ENCODE measurements at regions of chr6 and their contacts with region 1.

Region 1: DNA sequence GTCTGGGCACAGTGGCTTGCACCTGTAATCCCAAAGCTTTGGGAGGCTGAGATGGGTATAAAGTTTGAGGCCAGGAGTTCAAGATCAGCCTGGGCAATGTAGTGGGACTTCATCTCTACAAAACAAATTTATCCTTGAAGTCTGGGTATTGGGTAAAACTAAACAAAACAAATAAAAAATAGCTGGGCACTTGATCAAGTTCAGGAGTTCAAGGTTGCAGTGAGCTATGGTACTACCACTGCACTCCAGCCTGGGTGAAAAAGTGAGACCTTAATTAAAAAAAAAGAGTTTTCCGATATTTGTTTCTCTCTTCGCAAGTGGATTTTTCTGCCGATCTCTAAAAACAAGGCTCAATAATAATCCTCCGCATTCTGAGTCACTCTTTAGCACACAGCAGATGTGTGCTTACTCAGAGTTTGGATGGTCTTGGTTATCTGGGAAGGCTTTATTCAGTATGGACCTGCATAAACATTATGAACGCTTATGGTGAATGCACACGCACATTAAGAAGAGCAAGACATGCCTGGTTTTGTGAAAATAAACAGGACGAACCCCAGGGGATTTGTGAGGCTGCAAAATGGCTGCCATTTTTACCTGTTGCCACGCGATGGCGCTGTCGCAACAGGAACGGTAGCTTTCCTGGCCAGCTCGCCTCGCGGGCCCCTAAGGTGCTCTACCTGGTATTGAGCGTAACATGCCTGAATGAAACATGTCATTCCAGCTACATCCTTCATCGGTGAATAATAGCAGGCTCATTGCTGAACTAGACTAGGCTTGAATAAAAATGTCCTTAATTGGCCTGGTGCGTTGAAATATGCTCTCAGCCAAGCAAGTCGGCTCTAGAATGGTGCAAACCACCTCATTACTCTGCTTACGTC is 6.0 kb downstream of the OPN5 start:
- DNase-seq: peak; percentile 51
- ATAC-seq: peak; percentile 87
- H3K4me3 ChIP-seq: no peak overlapping the region
- H3K27ac ChIP-seq: no peak overlapping the region
- H3K4me1 ChIP-seq: no peaks in the 10 kb centered on the region
- H3K27me3 ChIP-seq: peaks cover 5% of the 10 kb centered on the region
- CTCF ChIP-seq: peak; percentile 91

Region 2: DNA sequence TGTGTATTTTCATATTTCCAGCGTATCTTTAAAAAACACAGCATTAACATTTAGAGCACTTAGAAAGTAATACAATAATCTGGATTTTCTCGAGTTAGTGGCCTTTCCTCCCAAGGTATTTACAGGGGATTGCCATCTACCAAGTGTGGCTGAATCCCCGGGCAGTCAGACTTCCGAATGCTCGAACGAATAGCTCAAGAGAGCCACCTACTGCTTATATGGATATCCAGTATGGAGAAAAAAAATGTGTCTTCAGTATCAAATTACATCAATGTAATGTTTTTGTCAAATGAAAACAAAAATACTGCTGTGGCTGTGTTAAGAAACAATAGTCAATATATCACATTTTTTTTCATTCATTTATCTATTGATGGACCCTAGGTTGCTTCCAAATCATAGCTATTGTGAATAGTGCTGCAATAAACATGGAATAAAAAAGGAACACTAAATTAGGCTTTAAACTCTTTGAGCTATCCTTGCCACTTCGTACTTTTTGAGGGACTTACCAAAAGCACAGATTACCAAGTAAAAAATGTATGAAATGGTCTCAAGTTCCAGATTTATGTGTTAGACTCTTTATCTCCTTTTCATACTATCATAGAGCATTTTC is 977.6 kb after region 1 on chr6:
- CTCF ChIA-PET with region 1: no interaction called
- POLR2A ChIA-PET with region 1: interaction called, 7 read pairs
- in situ Hi-C with region 1: no loop called
- intact Hi-C with region 1: loop called (anchors 1 kb)
- DNase-seq: peak; percentile 38
- ATAC-seq: no peak; the same call in 1 of the 2 replicates
- H3K4me3 ChIP-seq: no peak overlapping the region
- H3K27ac ChIP-seq: no peak overlapping the region; the same call in 1 of the 2 replicates
- H3K4me1 ChIP-seq: no peaks in the 10 kb centered on the region
- H3K27me3 ChIP-seq: no peaks in the 10 kb centered on the region
- CTCF ChIP-seq: peak; percentile 71

Region 3: GRCh38 chr6:49409951-49410542 is 1622.2 kb after region 1 on chr6:
- CTCF ChIA-PET with region 1: interaction called, 6 read pairs
- POLR2A ChIA-PET with region 1: no interaction called
- in situ Hi-C with region 1: no loop called
- intact Hi-C with region 1: loop called (anchors 5 kb)
- DNase-seq: peak; percentile 67
- ATAC-seq: peak; percentile 88
- H3K4me3 ChIP-seq: 0 out of 4 replicates have a peak overlapping the region, but pooled peaks of 1 of the 2 experiments have one; percentile 1
- H3K27ac ChIP-seq: no peak overlapping the region
- H3K4me1 ChIP-seq: no peaks in the 10 kb centered on the region
- H3K27me3 ChIP-seq: no peaks in the 10 kb centered on the region
- CTCF ChIP-seq: peak; percentile 86